CD8-positive, alpha-beta memory T cell (primary cell): ENCODE measurements at regions of chr19 and their contacts with region 1.

Region 1: DNA sequence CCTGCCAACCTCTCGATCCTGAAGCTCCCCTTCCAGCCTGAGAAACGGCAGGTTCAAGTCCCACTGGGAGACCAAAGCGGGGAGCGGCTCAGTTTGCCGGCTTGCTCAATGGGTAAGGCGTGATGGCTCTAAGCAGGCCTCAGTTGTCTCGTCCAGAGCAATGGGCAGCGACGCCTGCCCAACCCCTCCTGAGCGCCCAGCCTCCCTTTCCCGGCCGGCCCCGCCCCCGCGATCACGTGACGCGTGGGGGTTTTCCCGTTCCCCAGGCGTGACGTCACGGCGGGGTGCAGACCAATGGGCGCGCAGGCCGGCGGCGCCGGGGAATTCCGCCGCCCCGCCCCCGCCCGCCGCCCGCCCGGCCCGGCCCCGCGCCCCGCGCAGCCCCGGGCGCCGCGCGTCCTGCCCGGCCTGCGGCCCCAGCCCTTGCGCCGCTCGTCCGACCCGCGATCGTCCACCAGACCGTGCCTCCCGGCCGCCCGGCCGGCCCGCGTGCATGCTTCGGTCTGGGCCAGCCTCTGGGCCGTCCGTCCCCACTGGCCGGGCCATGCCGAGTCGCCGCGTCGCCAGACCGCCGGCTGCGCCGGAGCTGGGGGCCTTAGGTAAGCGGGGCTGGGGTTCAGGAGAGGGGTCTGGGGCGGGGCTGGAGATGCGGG is at the start of gene RELB:
- DNase-seq: peak; percentile 93 to 97 (median 96)
- H3K4me3 ChIP-seq: peak within 1 kb of the TSS; percentile 77
- H3K4me3 Mint-ChIP-seq: peak within 1 kb of the TSS; percentile 93 to 100 (median 99)
- H3K27ac ChIP-seq: peak within 1 kb of the TSS; percentile 99
- H3K27ac Mint-ChIP-seq: peak within 1 kb of the TSS; percentile 98 to 100 (median 100)
- H3K4me1 ChIP-seq: peaks cover 18% of the 10 kb centered on the region
- H3K4me1 Mint-ChIP-seq: peaks cover 10 to 24% (median 12%) of the 10 kb centered on the region in 3 donors
- H3K27me3 ChIP-seq: no peaks in the 10 kb centered on the region
- H3K27me3 Mint-ChIP-seq: peaks cover 0 to 3% of the 10 kb centered on the region in 2 donors
- total RNA-seq, gene RELB: 53.4 to 57.4 TPM

Region 2: GRCh38 chr19:45038931-45039893 is 38.0 kb after region 1 on chr19 and contains the start of gene CLASRP:
- CTCF ChIA-PET with region 1: no interaction called
- POLR2A ChIA-PET with region 1: interaction called, 13 read pairs
- DNase-seq: peak; percentile 83 to 90 (median 85)
- H3K4me3 ChIP-seq: peak within 1 kb of the TSS; percentile 95
- H3K4me3 Mint-ChIP-seq: peak within 1 kb of the TSS; percentile 86 to 100 (median 94)
- H3K27ac ChIP-seq: peak within 1 kb of the TSS; percentile 98
- H3K27ac Mint-ChIP-seq: peak within 1 kb of the TSS; percentile 79 to 100 (median 95)
- H3K4me1 ChIP-seq: peaks cover 24% of the 10 kb centered on the region
- H3K4me1 Mint-ChIP-seq: peaks cover 32 to 43% (median 32%) of the 10 kb centered on the region in 3 donors
- H3K27me3 ChIP-seq: no peaks in the 10 kb centered on the region
- H3K27me3 Mint-ChIP-seq: peaks cover 0 to 2% of the 10 kb centered on the region in 2 donors
- total RNA-seq, gene CLASRP: 75.5 to 84.1 TPM